HCT116 (cell line): ENCODE measurements at regions of chr2 and their contacts with region 1.

Region 1: DNA sequence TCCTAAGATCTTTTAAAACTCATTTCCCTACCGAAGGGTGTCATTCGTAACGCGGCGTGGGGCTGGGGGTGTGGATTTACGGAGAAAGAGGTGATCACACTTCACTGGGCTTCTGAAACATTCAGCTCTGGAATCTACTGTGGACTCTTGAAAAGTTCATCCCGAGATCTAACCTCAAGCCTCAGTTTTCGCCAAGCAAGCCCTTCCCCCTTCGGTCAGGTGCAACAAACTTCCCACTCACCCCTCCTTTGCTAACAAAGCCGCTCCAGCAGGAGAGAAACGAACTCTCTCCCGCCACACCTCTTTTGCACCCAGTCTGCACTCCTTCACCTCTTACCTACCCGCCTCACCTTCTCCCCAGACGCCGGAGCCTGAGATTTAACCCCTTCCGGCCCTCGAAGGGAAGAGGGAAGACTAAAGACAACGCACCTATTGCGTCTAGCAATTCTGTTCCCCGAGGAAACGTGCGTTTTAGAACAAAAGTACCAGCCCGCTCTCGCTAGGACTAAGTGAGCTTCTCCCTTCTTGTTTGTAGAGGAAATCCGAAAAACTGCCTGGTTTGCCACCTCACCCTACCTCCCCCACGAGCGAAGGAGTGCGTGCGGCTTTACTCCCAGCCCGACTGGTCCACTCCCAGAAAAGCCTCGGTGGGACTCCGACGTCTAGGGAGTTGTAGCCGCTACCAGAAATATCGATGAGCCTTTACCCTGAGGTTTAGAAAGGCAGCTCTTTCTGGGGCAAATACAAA is 538 bp upstream of the PEX13 start:
- DNase-seq: peak; percentile 86
- ATAC-seq: peak; percentile 80
- H3K4me3 ChIP-seq: peak overlapping the region; percentile 75 to 81
- H3K27ac ChIP-seq: peak overlapping the region; percentile 80
- H3K4me1 ChIP-seq: peaks cover 25 to 39% of the 10 kb centered on the region in 2 experiments
- H3K27me3 ChIP-seq: no peaks in the 10 kb centered on the region
- CTCF ChIP-seq: no peak
- POLR2A ChIP-seq: no peak
- RAD21 ChIP-seq: no peak; the same call in 1 of the 2 replicates

Region 2: DNA sequence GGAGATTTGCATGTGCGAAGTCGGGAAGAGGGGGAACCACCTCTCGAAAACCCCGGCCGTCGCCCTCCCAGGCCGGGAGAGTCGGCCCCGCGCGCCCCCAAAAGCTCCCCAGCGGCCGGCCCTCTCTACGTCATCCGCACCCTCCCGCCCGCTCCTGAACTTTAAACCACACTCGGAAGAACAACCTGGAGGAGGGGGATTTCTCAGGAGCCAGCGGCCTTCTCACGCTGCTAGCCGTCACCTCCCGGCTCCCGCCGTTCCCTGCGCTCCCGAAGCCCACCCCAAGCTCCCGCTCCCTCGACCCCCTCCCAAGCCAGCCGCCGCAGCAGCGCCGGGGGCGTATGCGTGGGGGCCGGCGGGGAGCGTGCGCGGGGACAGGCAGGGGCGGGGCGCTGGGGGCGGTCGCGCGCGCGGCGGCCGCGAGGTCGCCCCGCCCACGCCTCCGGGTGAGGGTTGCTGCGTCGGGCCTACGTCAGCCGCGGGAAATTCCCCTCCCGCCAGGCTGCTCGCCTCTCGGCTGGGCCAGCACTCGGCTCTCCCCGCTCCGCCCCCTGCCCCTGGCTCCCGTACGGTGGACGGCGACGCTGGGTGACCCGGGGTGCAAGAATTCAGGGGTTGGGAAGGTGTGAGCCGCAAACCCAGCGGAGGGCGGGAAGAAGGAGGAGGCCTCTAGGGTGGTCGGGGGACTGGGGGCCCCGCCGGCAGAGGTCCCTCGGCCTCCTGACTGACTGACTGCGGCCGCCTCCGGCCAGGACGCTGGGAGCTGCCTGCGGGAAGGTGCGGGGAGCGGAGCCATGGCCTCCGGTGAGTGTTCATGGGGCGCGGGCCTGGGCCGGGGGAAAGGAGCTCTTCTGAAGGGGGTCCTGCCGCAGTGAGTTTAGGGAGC is 135.7 kb before region 1 on chr2 and contains the start of gene REL:
- CTCF ChIA-PET with region 1: no interaction called
- POLR2A ChIA-PET with region 1: no interaction called
- RAD21 ChIA-PET with region 1: no interaction called
- intact Hi-C with region 1: loop called (anchors 5 kb)
- DNase-seq: peak; percentile 70
- ATAC-seq: peak; percentile 96
- H3K4me3 ChIP-seq: peak within 1 kb of the TSS; percentile 80 to 81
- H3K27ac ChIP-seq: peak within 1 kb of the TSS; percentile 73
- H3K4me1 ChIP-seq: peaks cover 6 to 19% of the 10 kb centered on the region in 2 experiments; a peak in 3 of 4 replicates
- H3K27me3 ChIP-seq: no peaks in the 10 kb centered on the region
- CTCF ChIP-seq: no peak
- POLR2A ChIP-seq: peak; percentile 50
- RAD21 ChIP-seq: no peak; the same call in 1 of the 2 replicates
- total RNA-seq, gene REL: 10.2 TPM

Region 3: DNA sequence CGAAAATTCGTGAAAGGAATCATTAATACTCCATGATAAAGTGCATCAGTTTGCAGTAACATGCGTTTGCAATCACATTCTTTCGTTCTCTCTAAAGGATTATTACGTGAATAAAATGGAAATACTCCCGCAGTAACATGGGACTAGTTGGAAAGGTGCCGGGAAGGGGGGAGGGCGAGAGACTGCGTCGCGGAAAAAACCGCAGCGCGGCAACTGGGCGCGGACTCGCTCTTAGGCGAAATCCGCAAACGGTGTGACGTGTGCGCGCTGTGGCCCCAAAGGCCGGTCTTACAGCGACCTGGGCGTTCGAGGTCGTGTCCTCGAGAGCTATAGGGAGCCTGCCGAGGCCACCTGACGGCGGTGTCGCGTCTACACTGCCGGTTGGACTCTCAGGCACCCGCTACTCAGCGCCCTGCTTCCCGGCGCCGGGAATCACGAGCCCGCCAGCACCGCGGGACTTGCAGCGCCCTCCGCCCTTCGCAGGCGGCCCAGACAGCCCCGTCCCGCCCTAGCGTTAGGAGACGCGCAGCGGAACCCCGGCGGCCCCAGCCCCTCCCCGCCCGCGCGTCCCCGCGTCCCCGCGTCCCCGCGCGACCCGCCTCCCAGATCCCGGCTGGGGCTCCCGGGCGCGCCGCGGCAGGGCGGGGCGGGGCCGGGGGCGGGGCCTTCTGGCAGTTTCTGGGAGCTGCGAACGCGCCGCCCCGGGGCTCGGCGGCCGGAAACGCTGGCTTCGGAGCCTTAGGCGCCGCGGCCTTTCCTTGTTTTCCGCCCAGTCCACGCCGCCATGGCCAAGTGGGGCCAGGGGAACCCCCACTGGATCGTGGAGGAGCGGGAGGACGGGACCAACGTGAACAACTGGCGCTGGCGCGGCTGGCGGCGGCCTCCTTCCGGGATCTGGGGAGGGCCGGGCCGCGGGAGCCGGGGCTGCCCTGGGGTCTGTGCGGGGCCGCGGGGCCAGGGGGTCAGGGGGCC is 160.1 kb after region 1 on chr2:
- CTCF ChIA-PET with region 1: no interaction called
- POLR2A ChIA-PET with region 1: no interaction called
- RAD21 ChIA-PET with region 1: no interaction called
- intact Hi-C with region 1: loop called (anchors 5 kb)
- DNase-seq: peak; percentile 69
- ATAC-seq: peak; percentile 93
- H3K4me3 ChIP-seq: peak overlapping the region; percentile 70 to 81
- H3K27ac ChIP-seq: peak overlapping the region; percentile 79
- H3K4me1 ChIP-seq: peaks cover 7 to 22% of the 10 kb centered on the region in 2 experiments
- H3K27me3 ChIP-seq: no peaks in the 10 kb centered on the region
- CTCF ChIP-seq: no peak
- POLR2A ChIP-seq: peak; percentile 83
- RAD21 ChIP-seq: peak; percentile 23; the same call in 1 of the 2 replicates

Region 4: GRCh38 chr2:61426267-61426897 is 409.4 kb after region 1 on chr2:
- CTCF ChIA-PET with region 1: no interaction called
- POLR2A ChIA-PET with region 1: no interaction called
- RAD21 ChIA-PET with region 1: no interaction called
- intact Hi-C with region 1: no loop called
- DNase-seq: peak; percentile 33
- ATAC-seq: peak; percentile 94
- H3K4me3 ChIP-seq: no peak overlapping the region
- H3K27ac ChIP-seq: no peak overlapping the region
- H3K4me1 ChIP-seq: peaks cover 0 to 19% of the 10 kb centered on the region in 2 experiments; a peak in 1 of 4 replicates
- H3K27me3 ChIP-seq: no peaks in the 10 kb centered on the region
- CTCF ChIP-seq: peak; percentile 45 to 81 (median 78); a peak in 5 of 6 replicates
- POLR2A ChIP-seq: no peak
- RAD21 ChIP-seq: peak; percentile 69